ENCODE measurements at regions of chr1 and their contacts with region 1.

Region 1: DNA sequence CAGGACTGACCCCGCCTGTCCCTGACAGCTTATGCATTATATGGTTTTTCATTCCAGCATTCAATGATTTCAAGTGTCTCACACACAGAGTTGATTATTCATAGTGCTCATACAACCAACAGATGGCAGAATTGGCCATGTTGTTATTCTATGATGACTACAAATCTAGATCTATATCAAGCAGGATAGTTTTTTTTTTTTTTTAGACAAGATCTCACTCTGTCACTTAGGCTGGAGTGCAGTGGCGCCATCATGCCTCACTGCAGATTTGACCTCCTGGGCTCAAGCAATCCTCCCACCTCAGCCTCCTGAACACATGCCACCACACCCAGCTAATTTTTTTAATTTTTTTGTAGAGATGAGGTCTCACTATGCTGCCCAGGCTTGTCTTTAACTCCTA is 40.1 kb upstream of the LRRC8D start:
- DNase-seq: peak; percentile 69
- ATAC-seq: peak; percentile 89
- H3K4me3 ChIP-seq: no peak overlapping the region
- H3K27ac ChIP-seq: no peak overlapping the region
- H3K4me1 ChIP-seq: peaks cover 2% of the 10 kb centered on the region
- H3K27me3 ChIP-seq: peaks cover 4% of the 10 kb centered on the region; the same call in 1 of the 2 replicates
- CTCF ChIP-seq: peak; percentile 54
- POLR2A ChIP-seq: no peak
- RAD21 ChIP-seq: peak; percentile 66

Region 2: DNA sequence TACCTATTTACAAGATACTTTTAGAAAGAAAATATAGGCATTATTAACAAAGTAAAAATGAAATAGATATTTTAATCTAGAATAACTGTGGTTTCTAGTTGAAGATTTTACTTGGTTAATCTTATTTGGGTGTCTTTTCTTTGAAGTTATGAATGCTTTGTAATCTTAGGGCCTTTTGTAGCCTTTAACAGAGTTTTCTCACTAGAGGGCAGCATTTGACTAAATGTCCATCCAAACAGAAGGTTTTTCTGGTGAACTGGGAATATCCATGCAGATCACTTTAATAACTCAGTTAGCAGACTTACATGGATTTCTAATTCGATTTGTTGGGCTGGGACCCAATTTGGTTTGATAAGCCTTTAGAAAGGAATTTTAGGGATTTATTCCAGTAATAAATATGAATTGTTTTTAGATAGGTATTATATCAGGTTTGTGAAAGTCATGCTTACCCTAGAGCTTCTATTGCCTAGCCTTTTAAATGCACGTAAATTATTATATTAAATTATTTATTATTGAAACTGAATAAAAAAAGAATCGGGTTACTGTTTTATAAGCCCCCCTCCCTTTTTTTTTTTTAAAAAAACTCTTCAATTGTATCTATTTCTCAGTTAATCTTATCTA is 333.9 kb after region 1 on chr1:
- CTCF ChIA-PET with region 1: no interaction called
- POLR2A ChIA-PET with region 1: no interaction called
- dilution Hi-C with region 1: no loop called
- in situ Hi-C with region 1: no loop called
- intact Hi-C with region 1: loop called (anchors 5 kb)
- DNase-seq: peak; percentile 49
- ATAC-seq: peak; percentile 53; the same call in 1 of the 2 replicates
- H3K4me3 ChIP-seq: no peak overlapping the region
- H3K27ac ChIP-seq: no peak overlapping the region
- H3K4me1 ChIP-seq: no peaks in the 10 kb centered on the region
- H3K27me3 ChIP-seq: no peaks in the 10 kb centered on the region
- CTCF ChIP-seq: peak; percentile 70
- POLR2A ChIP-seq: no peak
- RAD21 ChIP-seq: peak; percentile 63

Region 3: DNA sequence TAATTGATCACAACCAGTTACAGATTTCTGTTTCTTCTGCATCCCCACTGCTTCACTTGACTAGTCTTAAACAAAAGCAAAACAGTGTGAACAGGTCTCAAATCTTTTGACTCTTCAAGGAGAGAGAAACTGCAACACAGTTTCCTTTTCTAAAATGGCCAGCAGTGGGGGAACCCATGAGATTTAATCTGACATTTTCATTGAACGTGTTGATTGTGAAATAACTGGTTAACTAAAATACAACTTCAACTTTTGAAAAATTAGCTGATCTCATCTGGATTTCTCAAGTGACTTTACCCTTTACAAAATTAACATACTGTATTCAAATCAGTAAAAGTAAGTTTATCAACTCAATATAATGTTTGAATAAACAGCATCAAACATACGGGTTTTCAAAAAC is 1480.9 kb after region 1 on chr1:
- CTCF ChIA-PET with region 1: no interaction called
- POLR2A ChIA-PET with region 1: no interaction called
- dilution Hi-C with region 1: no loop called
- in situ Hi-C with region 1: no loop called
- intact Hi-C with region 1: loop called (anchors 10 kb)
- DNase-seq: no peak
- ATAC-seq: no peak
- H3K4me3 ChIP-seq: no peak overlapping the region
- H3K27ac ChIP-seq: no peak overlapping the region
- H3K4me1 ChIP-seq: no peaks in the 10 kb centered on the region
- H3K27me3 ChIP-seq: no peaks in the 10 kb centered on the region
- CTCF ChIP-seq: no peak
- POLR2A ChIP-seq: no peak
- RAD21 ChIP-seq: no peak

Measured in IMR-90 (cell line).